Gastrocnemius medialis (tissue), 4 donors: ENCODE measurements at regions of chr21 and their contacts with region 1.

Region 1: DNA sequence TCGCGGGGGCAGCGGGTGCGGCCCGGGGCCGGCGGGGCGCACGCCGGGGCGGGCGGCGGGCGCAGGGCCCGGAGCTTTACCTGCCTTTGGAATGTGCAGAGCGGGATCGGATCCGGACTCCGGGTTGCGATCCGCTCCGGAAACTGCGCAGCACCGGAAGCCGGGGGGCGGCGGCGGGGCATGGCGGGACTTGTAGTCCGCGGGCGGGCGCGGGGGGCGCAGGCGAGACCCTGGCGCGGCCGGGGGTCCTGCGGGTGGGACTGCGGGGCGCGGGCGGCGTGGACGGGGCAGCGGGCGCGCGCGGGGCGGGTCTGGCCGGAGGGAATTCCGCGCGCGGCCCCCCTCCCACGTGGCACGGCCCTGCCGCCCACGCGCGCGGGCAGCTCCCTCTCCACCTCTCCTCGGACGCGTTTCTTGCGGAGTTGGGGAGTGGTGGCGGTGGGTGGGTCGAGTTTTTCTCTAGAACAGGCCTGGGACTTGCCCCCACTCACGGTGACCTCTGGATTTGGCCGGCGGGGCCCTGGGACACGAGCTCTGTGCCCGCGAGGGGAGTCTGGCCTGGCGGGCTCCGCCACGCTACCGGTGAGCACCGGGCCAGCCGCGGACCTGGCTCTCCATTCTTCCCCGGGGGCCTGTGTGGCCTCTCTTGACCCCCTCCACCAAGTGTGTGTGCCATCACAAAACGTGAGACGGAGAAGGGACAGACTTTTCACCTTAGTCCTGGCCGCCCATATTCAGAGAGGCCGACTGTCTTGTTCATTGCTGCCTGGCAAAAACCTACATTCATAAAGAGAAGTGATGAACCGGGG is at the start of gene PRDM15:
- DNase-seq: peak; percentile 69 to 71
- ATAC-seq: peak; percentile 92 to 93
- H3K4me3 ChIP-seq: peak within 1 kb of the TSS; percentile 86 to 96 (median 90)
- H3K27ac ChIP-seq: peak within 1 kb of the TSS; percentile 86 to 89 (median 86)
- H3K4me1 ChIP-seq: peaks cover 6 to 9% of the 10 kb centered on the region in 2 donors
- H3K27me3 ChIP-seq: no peaks in the 10 kb centered on the region
- CTCF ChIP-seq: no peak
- POLR2A ChIP-seq: peak in 1 of 2 donors; percentile 20
- total RNA-seq, gene PRDM15: 4.4 to 13.6 (median 5.4) TPM

Region 2: GRCh38 chr21:41167348-41168342 is 711.7 kb before region 1 on chr21 and contains the start of gene BACE2:
- in situ Hi-C with region 1: no loop called
- intact Hi-C with region 1: loop called (anchors 5 kb)
- DNase-seq: peak; percentile 52 to 59
- ATAC-seq: peak; percentile 64 to 68
- H3K4me3 ChIP-seq: peak within 1 kb of the TSS; percentile 73 to 88 (median 84)
- H3K27ac ChIP-seq: peak within 1 kb of the TSS; percentile 85 to 89 (median 86)
- H3K4me1 ChIP-seq: peaks cover 17 to 18% of the 10 kb centered on the region in 2 donors
- H3K27me3 ChIP-seq: no peaks in the 10 kb centered on the region
- CTCF ChIP-seq: peak in 4 of 5 experiments; percentile 38 to 76 (median 66)
- POLR2A ChIP-seq: peak; percentile 54 to 66
- total RNA-seq, gene BACE2: 7.5 to 17.5 (median 9.3) TPM

Region 3: DNA sequence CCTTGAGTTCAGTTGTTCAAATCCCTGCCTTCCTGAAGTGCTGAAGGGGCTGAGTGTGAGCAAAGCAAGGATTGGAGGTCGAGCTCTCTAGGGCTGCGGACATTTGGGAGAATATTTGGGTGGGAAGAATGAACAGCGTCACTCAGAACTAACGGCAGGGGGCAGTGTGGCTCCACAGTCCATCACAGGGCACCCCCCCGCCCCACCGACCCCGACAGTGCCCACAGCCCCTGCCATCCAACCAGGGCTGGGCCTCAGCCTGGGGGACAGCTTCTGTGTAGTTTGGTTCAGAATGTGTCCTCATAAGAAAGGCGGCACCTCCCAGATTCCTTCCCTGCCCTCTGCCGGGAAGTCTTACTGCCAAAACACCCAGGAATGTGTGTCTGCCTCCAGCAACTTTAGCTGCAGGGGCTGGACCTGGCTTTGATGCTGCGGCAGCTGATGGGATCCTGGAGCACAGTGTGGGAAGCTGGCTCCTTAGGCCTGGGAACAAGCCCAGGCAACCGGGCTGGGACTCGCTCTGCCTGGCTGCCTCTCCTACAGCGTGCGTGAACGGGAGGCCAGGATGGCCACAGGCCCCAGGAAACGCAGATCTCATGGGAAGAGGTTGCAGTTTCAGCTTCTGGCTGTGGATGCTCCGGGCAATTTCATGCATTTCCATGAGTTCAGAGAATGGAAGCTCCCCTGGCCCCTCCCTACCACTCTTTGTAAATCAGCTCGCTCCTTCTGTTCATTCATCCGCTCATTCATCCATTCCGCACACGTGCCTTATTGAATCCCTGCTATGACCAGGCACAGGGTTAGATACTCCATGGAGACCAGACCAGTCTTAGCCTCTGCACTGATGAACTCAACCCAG is 266.5 kb before region 1 on chr21:
- in situ Hi-C with region 1: no loop called
- intact Hi-C with region 1: loop called (anchors 5 kb)
- DNase-seq: peak; percentile 47 to 72
- ATAC-seq: peak; percentile 75 to 77
- H3K4me3 ChIP-seq: no peak overlapping the region
- H3K27ac ChIP-seq: peak overlapping the region in 1 of 4 donors; percentile 11
- H3K4me1 ChIP-seq: peaks cover 5 to 12% of the 10 kb centered on the region in 2 donors
- H3K27me3 ChIP-seq: peaks cover 0 to 8% (median 5%) of the 10 kb centered on the region in 3 donors
- CTCF ChIP-seq: peak; percentile 33 to 68 (median 54)
- POLR2A ChIP-seq: no peak

Region 4: GRCh38 chr21:41777951-41778874 is 101.2 kb before region 1 on chr21:
- in situ Hi-C with region 1: no loop called
- intact Hi-C with region 1: no loop called
- DNase-seq: peak; percentile 60 to 73
- ATAC-seq: peak; percentile 84 to 92
- H3K4me3 ChIP-seq: no peak overlapping the region
- H3K27ac ChIP-seq: no peak overlapping the region
- H3K4me1 ChIP-seq: peaks cover 0 to 6% of the 10 kb centered on the region in 2 donors
- H3K27me3 ChIP-seq: peaks cover 19 to 43% (median 20%) of the 10 kb centered on the region in 3 donors
- CTCF ChIP-seq: peak; percentile 61 to 89 (median 79)
- POLR2A ChIP-seq: no peak

Region 5: GRCh38 chr21:41953831-41954653 is 74.6 kb after region 1 on chr21 and contains the start of gene C2CD2:
- in situ Hi-C with region 1: no loop called
- intact Hi-C with region 1: loop called (anchors 5 kb)
- DNase-seq: no peak
- ATAC-seq: peak; percentile 60 to 67
- H3K4me3 ChIP-seq: peak within 1 kb of the TSS; percentile 61 to 68 (median 62)
- H3K27ac ChIP-seq: peak within 1 kb of the TSS; percentile 53 to 71 (median 64)
- H3K4me1 ChIP-seq: peaks cover 33 to 38% of the 10 kb centered on the region in 2 donors
- H3K27me3 ChIP-seq: peaks cover 0 to 17% (median 0%) of the 10 kb centered on the region in 3 donors
- CTCF ChIP-seq: no peak
- POLR2A ChIP-seq: peak; percentile 56 to 60
- total RNA-seq, gene C2CD2: 1.7 to 7.2 (median 2.4) TPM